CD4-positive, alpha-beta T cell (primary cell): ENCODE measurements at regions of chr15 and their contacts with region 1.

Region 1: DNA sequence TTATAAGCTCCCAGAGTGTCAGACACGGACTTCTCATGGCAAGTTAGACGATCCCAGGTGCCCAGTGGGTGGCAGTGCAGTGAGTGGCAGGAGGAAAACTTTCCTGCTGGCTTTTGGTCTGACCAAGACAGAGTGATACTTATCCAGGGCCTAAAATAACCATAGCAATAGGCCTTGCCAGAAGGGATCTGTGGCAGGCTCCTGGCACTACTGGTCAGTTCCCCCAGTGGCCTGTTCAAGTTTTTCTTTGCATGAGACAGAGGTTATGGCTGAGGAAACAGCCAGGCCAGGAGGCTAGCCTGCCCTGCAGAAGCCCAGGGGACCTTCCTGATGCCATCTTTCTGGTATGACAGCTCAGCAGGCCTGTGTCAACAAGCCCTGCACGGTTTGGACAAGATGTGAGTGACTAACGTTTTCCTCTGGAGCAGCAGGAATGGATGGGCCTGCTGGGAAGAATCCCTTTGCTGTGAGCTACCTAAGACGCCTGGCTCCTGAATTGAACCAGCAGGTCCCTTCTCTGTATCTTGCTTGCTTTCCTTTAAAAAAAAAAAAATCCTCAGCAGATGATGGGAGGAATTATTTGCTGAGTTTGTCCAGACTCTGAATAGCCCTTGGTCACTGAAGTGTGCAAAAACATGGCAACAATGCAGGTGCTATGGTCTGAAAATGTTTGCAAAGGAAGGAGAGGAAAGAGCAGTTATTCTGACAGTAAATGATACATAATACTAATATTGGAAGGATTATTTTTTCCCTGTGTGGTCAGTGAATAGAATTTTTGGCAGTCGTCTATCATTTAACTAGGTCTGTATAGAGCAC is 18.0 kb downstream of the SCG5 start:
- DNase-seq: no peak
- ATAC-seq: no peak
- H3K4me3 ChIP-seq: no peak overlapping the region
- H3K4me3 Mint-ChIP-seq: no peak overlapping the region
- H3K27ac ChIP-seq: no peak overlapping the region
- H3K27ac Mint-ChIP-seq: no peak overlapping the region
- H3K4me1 ChIP-seq: peaks cover 5% of the 10 kb centered on the region
- H3K4me1 Mint-ChIP-seq: peaks cover 10% of the 10 kb centered on the region
- H3K27me3 ChIP-seq: no peaks in the 10 kb centered on the region
- H3K27me3 Mint-ChIP-seq: no peaks in the 10 kb centered on the region
- CTCF ChIP-seq: no peak

Region 2: GRCh38 chr15:33132722-33133345 is 473.3 kb after region 1 on chr15:
- CTCF ChIA-PET with region 1: no interaction called
- POLR2A ChIA-PET with region 1: no interaction called
- intact Hi-C with region 1: loop called (anchors 2 to 5 kb)
- DNase-seq: peak in 3 of 14 experiments; percentile 46 to 57 (median 55)
- ATAC-seq: no peak
- H3K4me3 ChIP-seq: no peak overlapping the region
- H3K4me3 Mint-ChIP-seq: no peak overlapping the region
- H3K27ac ChIP-seq: no peak overlapping the region
- H3K27ac Mint-ChIP-seq: no peak overlapping the region
- H3K4me1 ChIP-seq: no peaks in the 10 kb centered on the region
- H3K4me1 Mint-ChIP-seq: peaks cover 2% of the 10 kb centered on the region
- H3K27me3 ChIP-seq: no peaks in the 10 kb centered on the region
- H3K27me3 Mint-ChIP-seq: no peaks in the 10 kb centered on the region
- CTCF ChIP-seq: peak; percentile 70